Sigmoid colon (tissue), 7 donors: ENCODE measurements at regions of chr15 and their contacts with region 1.

Region 1: DNA sequence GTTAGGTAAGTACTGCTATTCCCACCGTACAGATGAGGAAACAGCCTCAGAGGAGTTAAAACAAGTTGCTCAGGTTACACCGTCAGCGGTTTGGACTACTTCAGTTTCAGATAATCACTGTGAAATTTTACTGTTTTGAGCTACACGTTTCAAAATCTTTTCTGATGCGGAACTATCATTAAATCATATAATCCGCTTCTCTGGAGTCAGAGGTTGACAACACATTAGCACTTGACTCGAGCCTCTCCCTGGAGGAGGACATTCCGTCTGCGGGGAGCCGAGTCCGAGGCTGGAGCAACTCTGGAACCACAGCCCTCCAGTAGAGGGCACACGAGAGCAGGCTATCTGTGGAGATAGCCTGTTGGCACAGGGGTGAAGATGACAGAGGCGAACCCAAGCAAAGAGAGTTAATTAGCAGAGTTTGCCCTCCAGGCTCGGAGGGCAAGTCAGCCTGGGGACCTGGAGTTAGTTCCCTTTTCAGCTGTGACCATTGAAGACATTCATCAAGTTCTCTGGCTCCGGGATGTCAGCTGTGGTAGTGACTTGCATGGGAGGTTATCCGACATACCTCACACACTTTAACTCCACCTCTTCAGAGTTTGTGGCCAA is 131.2 kb downstream of the IGF1R start:
- DNase-seq: peak; percentile 86
- H3K4me3 ChIP-seq: no peak overlapping the region
- H3K27ac ChIP-seq: peak overlapping the region in 3 of 4 donors; percentile 16 to 58 (median 44)
- H3K4me1 ChIP-seq: peaks cover 0 to 47% (median 39%) of the 10 kb centered on the region in 4 donors
- H3K27me3 ChIP-seq: no peaks in the 10 kb centered on the region
- CTCF ChIP-seq: peak; percentile 49 to 90 (median 88)
- EP300 ChIP-seq: no peak
- POLR2A ChIP-seq: no peak

Region 2: DNA sequence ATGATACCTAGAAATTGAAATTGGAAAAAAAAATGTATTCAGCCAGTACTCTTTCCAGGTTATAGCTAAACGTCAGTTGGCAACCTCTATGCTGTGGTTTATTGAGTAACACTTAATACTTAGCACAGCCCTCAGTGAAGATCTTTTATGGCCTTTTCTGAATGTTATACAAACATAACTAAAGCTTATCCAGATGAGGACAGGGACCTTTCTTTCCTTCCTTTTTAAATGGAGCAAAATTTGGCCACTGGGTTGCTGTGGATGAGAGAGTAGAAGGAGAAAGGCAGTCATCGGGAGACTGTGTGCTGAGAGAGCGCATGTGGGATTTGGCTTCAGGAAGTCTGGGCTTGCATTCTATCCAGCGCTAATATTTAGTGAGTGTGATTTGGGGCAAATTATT is 95.1 kb before region 1 on chr15:
- intact Hi-C with region 1: loop called (anchors 5 kb)
- DNase-seq: no peak
- H3K4me3 ChIP-seq: no peak overlapping the region
- H3K27ac ChIP-seq: peak overlapping the region in 3 of 4 donors; percentile 62 to 81 (median 77)
- H3K4me1 ChIP-seq: peaks cover 0 to 88% (median 79%) of the 10 kb centered on the region in 4 donors
- H3K27me3 ChIP-seq: no peaks in the 10 kb centered on the region
- CTCF ChIP-seq: no peak
- EP300 ChIP-seq: no peak
- POLR2A ChIP-seq: no peak

Region 3: GRCh38 chr15:98842192-98842966 is 62.8 kb after region 1 on chr15:
- intact Hi-C with region 1: no loop called
- DNase-seq: no peak
- H3K4me3 ChIP-seq: no peak overlapping the region
- H3K27ac ChIP-seq: no peak overlapping the region
- H3K4me1 ChIP-seq: peaks cover 0 to 55% (median 29%) of the 10 kb centered on the region in 4 donors
- H3K27me3 ChIP-seq: no peaks in the 10 kb centered on the region
- CTCF ChIP-seq: no peak
- EP300 ChIP-seq: no peak
- POLR2A ChIP-seq: no peak